PC-3 (cell line): ENCODE measurements at regions of chr20 and their contacts with region 1.

Region 1: DNA sequence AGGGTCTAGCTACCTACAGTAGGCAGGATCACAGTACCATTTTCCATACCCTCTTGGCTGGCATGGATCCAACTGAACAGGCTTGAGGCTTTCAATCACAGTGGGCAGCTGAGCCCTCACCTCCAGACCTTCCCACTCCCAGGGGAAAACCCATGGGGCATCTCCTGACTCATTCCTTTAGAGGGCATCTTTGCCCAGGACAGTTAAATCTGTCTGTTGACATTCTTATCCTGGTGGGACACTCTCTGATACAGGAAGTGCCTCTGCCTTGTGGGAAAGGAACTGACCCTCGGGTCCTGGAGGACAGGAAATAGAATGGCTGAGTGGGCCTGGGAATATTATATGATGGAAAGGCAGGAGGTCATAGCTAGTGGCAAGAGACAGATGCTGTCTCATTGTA is 10.2 kb upstream of the EPB41L1 start:
- DNase-seq: peak; percentile 8
- ATAC-seq: peak; percentile 50; the same call in 1 of the 2 replicates
- H3K4me3 ChIP-seq: no peak overlapping the region
- H3K27ac ChIP-seq: no peak overlapping the region
- H3K4me1 ChIP-seq: no peaks in the 10 kb centered on the region
- H3K27me3 ChIP-seq: no peaks in the 10 kb centered on the region
- CTCF ChIP-seq: no peak

Region 2: DNA sequence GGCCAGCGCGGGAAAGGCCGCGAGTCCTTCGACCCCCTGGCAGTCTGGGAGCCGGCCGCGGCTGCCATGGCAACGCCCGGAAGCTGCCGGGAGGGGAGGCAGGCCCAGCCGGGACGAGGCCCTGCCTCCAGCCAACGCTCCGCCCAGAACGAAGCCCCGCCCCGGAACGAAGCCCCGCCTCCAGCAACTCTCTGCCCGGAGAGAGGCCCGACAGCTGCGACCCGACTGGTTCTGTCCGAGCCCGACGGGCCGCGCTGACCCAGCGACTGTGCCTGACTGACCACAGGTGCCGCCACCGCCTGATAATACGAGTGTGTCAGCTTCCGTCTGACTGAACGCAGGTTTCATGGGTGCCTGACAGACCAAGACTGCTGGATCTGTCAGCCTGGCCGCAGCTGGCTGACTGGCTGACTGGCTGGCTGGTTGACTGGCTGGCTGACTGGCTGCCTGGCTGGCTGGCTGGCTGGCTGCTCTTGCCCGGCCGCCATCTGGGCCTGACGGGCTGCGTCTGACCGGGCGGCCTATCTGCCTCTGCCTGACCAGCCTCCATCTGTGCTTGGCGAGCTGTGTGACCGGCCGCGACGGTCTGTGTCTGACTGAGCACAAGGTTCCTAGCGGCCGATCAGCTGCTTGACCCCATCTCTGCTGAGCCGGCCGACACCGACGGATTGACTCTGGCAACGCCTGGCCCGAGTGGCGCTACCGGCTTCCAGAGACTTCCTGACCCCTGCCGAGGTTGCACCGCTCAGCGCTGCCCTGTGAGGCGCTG is 79.5 kb before region 1 on chr20:
- CTCF ChIA-PET with region 1: no interaction called
- POLR2A ChIA-PET with region 1: no interaction called
- intact Hi-C with region 1: loop called (anchors 2 kb)
- DNase-seq: peak; percentile 89
- ATAC-seq: peak; percentile 97
- H3K4me3 ChIP-seq: peak overlapping the region; percentile 74
- H3K27ac ChIP-seq: no peak overlapping the region
- H3K4me1 ChIP-seq: peaks cover 26% of the 10 kb centered on the region
- H3K27me3 ChIP-seq: no peaks in the 10 kb centered on the region
- CTCF ChIP-seq: no peak

Region 3: GRCh38 chr20:36093025-36093803 is 51.1 kb before region 1 on chr20:
- CTCF ChIA-PET with region 1: no interaction called
- POLR2A ChIA-PET with region 1: no interaction called
- intact Hi-C with region 1: loop called (anchors 2 kb)
- DNase-seq: peak; percentile 52
- ATAC-seq: peak; percentile 64
- H3K4me3 ChIP-seq: peak overlapping the region; percentile 82
- H3K27ac ChIP-seq: peak overlapping the region; percentile 3; the same call in 1 of the 2 replicates
- H3K4me1 ChIP-seq: peaks cover 18% of the 10 kb centered on the region
- H3K27me3 ChIP-seq: no peaks in the 10 kb centered on the region
- CTCF ChIP-seq: no peak

Region 4: DNA sequence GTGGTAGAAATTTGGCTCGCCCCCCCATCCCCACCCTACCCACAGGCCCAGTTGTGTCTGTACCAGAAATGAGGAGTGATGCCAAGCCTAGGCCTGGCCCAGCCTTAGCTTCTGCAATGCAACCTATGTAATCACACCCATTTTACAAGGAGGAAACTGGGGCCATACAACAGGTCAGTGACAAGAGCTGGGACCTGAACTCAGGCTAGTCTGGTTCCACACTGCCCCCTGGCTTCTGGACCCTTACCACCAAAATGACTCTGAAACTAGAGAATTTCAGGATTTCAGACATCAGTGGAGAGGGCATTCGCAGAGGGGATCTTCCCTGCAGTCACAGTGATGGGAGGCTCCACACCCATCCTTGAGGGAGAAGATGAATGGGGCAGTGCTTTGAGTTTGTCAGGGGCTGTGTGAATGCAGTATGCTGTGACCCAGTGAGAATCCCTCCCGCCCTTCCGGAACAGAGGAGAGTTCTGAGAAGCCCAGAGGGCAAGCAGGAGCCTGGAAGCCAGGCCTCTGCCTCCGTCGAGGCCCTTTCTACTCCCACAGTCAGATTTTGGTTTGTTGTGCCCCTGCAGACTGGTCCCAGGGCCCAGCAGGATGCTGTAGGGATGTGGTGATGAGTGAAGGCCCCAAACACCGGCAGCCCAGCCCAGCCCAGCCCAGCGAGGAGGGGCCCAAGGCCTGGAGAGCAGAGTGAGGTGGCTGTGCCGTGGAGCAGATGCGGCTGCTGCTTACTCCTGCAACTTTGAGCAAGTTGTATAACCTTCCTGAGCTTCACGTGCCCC is 348.9 kb after region 1 on chr20:
- CTCF ChIA-PET with region 1: no interaction called
- POLR2A ChIA-PET with region 1: no interaction called
- intact Hi-C with region 1: no loop called
- DNase-seq: peak; percentile 12
- ATAC-seq: peak; percentile 45
- H3K4me3 ChIP-seq: no peak overlapping the region
- H3K27ac ChIP-seq: no peak overlapping the region
- H3K4me1 ChIP-seq: no peaks in the 10 kb centered on the region
- H3K27me3 ChIP-seq: no peaks in the 10 kb centered on the region
- CTCF ChIP-seq: peak; percentile 45

Region 5: GRCh38 chr20:37142708-37143107 is 998.4 kb after region 1 on chr20:
- CTCF ChIA-PET with region 1: no interaction called
- POLR2A ChIA-PET with region 1: no interaction called
- intact Hi-C with region 1: no loop called
- DNase-seq: no peak
- ATAC-seq: no peak
- H3K4me3 ChIP-seq: no peak overlapping the region
- H3K27ac ChIP-seq: no peak overlapping the region
- H3K4me1 ChIP-seq: no peaks in the 10 kb centered on the region
- H3K27me3 ChIP-seq: no peaks in the 10 kb centered on the region
- CTCF ChIP-seq: no peak